ENCODE measurements at regions of chr4 and their contacts with region 1.

Region 1: DNA sequence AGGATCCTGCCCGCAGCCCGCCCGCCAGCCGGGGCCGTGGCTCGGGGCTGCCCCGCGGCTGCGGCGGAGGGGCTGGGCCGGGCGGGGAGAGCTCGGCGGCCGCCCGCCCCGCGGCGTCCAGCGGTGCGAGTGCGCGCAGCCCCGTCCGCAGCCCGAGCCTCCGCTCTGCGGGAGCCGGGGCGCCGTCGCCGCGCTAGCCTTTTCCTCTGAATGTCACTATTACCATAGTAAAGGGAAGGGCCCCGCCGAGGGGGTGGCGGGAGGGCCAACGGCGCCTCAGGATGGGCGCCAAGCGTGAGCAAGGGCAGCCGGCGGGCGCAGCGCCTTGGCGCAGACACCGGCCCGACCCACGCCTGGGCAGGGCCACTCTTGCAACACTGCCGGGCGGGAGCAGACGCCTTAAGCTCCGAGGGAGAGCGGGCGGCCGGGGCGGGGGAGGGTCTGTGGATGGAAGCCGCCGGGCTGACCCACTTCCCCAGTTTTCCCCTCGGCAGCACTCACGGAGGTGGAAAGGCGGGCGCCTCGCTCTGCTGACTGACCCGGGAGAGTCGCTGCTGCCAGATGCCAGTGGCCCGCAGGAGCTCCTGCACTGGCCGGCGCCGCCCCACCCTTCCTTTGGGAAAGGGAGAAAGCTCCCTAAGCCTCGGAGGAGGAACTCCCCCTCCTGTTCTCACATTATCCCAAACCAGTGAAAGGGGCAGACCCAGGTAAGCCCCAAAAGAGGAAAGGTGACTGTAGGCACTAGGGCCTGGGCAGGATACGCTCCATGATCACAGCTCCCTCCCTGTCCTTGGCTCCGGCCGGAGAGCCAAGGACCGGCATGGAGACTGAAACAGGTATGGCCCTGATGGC is 329.4 kb downstream of the HNRNPD start:
- DNase-seq: peak; percentile 43
- ATAC-seq: peak; percentile 37
- H3K4me3 Mint-ChIP-seq: no peak overlapping the region
- H3K27ac Mint-ChIP-seq: no peak overlapping the region
- H3K4me1 Mint-ChIP-seq: peaks cover 21% of the 10 kb centered on the region
- H3K27me3 Mint-ChIP-seq: peaks cover 46% of the 10 kb centered on the region

Region 2: GRCh38 chr4:81565142-81565870 is 479.1 kb before region 1 on chr4:
- CTCF ChIA-PET with region 1: no interaction called
- POLR2A ChIA-PET with region 1: no interaction called
- intact Hi-C with region 1: loop called in 1 of 2 experiments (anchors 10 kb)
- DNase-seq: no peak
- ATAC-seq: no peak
- H3K4me3 Mint-ChIP-seq: no peak overlapping the region
- H3K27ac Mint-ChIP-seq: no peak overlapping the region
- H3K4me1 Mint-ChIP-seq: peaks cover 5% of the 10 kb centered on the region
- H3K27me3 Mint-ChIP-seq: no peaks in the 10 kb centered on the region

Region 3: DNA sequence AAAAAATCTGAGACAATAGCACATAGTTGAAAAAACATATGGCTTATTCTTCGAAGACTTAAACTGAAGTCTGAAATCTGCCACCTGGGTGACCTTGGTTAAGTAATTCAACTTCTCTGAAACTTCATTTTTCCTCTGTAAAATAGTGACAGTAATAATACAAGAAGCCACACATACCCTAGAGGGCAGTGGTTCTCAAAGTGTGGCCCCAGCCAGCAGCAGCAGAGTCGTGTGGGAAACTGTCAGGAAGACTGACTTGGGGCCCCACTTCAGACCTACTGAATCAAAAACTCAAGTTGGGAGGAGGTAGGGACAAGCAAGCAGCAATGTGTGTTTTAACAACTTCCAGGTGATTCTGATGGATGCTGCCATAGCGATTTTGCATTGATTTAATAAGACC is 79.6 kb after region 1 on chr4:
- CTCF ChIA-PET with region 1: no interaction called
- POLR2A ChIA-PET with region 1: no interaction called
- intact Hi-C with region 1: no loop called
- DNase-seq: peak; percentile 15
- ATAC-seq: no peak
- H3K4me3 Mint-ChIP-seq: no peak overlapping the region
- H3K27ac Mint-ChIP-seq: no peak overlapping the region
- H3K4me1 Mint-ChIP-seq: peaks cover 10% of the 10 kb centered on the region
- H3K27me3 Mint-ChIP-seq: no peaks in the 10 kb centered on the region

Region 4: DNA sequence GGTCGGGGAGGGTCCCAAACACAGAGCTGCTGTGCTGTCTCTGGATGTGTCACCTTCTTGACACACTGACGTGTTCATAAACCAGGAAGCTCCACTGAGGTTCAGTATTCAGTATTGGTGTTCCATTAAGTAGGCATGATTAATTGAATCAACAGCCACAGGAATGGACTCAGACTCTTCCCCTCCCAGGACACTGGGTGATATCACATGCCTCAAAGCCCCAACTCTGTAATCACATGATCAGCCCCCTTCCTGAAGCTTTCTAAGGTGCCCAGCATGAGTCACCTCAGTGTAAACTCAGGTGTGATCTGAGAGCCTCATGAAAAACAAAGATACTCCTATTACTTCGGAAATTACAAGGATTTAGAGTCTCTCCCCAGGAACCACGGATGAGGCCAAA is 350.5 kb after region 1 on chr4:
- CTCF ChIA-PET with region 1: no interaction called
- POLR2A ChIA-PET with region 1: no interaction called
- intact Hi-C with region 1: no loop called
- DNase-seq: no peak
- ATAC-seq: no peak
- H3K4me3 Mint-ChIP-seq: no peak overlapping the region
- H3K27ac Mint-ChIP-seq: no peak overlapping the region
- H3K4me1 Mint-ChIP-seq: no peaks in the 10 kb centered on the region
- H3K27me3 Mint-ChIP-seq: no peaks in the 10 kb centered on the region

Region 5: GRCh38 chr4:82745173-82745842 is 700.9 kb after region 1 on chr4:
- CTCF ChIA-PET with region 1: no interaction called
- POLR2A ChIA-PET with region 1: no interaction called
- intact Hi-C with region 1: no loop called
- DNase-seq: no peak
- ATAC-seq: no peak
- H3K4me3 Mint-ChIP-seq: no peak overlapping the region
- H3K27ac Mint-ChIP-seq: no peak overlapping the region
- H3K4me1 Mint-ChIP-seq: no peaks in the 10 kb centered on the region
- H3K27me3 Mint-ChIP-seq: peaks cover 2% of the 10 kb centered on the region

Measured in activated CD4-positive, alpha-beta T cell treated with anti-CD3 and anti-CD28 coated beads for 36 hours (primary cell).